ENCODE measurements at regions of chr12 and their contacts with region 1.

Region 1: GRCh38 chr12:1117970-1118563 is 127.0 kb downstream of the ERC1 start:
- DNase-seq: peak; percentile 81
- H3K4me3 ChIP-seq: no peak overlapping the region
- H3K27ac ChIP-seq: no peak overlapping the region
- H3K4me1 ChIP-seq: peaks cover 13% of the 10 kb centered on the region
- H3K27me3 ChIP-seq: no peaks in the 10 kb centered on the region
- CTCF ChIP-seq: peak; percentile 66 to 79
- POLR2A ChIP-seq: no peak

Region 2: GRCh38 chr12:1083889-1084262 is 34.2 kb before region 1 on chr12:
- CTCF ChIA-PET with region 1: no interaction called
- POLR2A ChIA-PET with region 1: no interaction called
- dilution Hi-C with region 1: no loop called
- intact Hi-C with region 1: no loop called
- DNase-seq: no peak
- H3K4me3 ChIP-seq: no peak overlapping the region
- H3K27ac ChIP-seq: no peak overlapping the region
- H3K4me1 ChIP-seq: no peaks in the 10 kb centered on the region
- H3K27me3 ChIP-seq: no peaks in the 10 kb centered on the region
- CTCF ChIP-seq: no peak
- POLR2A ChIP-seq: no peak

Region 3: DNA sequence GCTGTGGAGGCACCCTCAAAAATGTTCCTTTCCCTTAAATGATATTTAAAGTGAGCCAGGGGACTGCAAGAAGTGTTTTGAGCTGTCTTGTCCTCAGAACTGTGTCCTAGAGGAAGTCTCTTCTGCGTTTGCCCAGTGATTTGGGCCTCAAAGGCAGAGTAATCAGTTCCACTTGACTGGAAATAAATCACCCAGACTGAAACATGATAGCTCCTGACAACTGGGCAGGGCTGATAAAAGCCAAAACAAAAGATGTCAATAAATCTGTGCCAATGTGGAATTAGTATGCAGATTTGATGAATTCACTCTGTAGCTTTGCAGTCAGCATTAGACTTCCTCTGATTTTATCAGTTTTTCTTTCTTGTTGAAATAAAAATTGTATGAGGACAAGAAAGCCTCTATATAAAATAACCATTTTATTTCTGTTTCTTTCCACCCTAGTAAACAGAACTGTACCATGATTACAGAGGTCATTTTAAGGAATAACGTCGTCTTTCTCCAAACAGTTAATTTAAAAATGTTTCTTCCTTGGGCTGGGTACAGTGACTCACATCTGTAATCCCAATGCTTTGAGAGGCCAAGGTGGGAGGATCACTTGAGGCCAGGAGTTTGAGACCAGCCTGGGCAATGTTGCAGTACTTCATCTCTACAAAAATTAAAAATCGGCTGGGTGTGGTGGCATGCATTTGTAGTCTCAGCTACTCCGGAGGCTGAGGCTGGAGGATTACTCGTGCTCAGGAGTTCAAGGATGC is 53.8 kb after region 1 on chr12:
- CTCF ChIA-PET with region 1: interaction called, 11 read pairs
- POLR2A ChIA-PET with region 1: no interaction called
- dilution Hi-C with region 1: no loop called
- intact Hi-C with region 1: no loop called
- DNase-seq: peak; percentile 94
- H3K4me3 ChIP-seq: no peak overlapping the region
- H3K27ac ChIP-seq: peak overlapping the region; percentile 34
- H3K4me1 ChIP-seq: peaks cover 17% of the 10 kb centered on the region
- H3K27me3 ChIP-seq: no peaks in the 10 kb centered on the region
- CTCF ChIP-seq: no peak
- POLR2A ChIP-seq: peak; percentile 25

Region 4: DNA sequence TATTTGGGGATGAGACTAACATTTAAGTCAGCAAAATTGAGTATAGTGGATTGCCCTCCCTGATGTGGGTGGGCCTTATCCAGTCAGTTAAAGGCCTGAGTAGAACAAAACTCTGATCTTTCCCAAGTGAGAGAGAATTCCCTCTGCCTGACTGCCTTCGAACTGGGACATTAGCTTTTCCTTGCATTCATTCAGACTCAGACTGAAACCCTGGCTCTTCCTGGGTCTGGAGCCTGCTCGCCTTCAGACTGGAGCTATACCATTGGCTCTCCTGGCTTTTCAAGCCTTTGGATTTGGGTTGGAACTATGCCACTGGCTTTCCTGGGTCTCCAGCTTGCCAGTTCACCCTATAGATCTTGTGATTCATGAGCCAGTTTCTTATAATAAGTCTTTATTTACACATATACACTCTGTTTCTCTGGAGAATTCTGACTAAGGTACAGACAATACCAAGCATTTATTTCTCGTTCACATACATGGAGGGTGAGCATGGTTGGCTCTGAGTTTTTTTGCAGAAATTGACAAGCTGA is 169.4 kb after region 1 on chr12:
- CTCF ChIA-PET with region 1: interaction called, 18 read pairs
- POLR2A ChIA-PET with region 1: no interaction called
- dilution Hi-C with region 1: no loop called
- intact Hi-C with region 1: no loop called
- DNase-seq: no peak
- H3K4me3 ChIP-seq: no peak overlapping the region
- H3K27ac ChIP-seq: no peak overlapping the region
- H3K4me1 ChIP-seq: peaks cover 14% of the 10 kb centered on the region
- H3K27me3 ChIP-seq: no peaks in the 10 kb centered on the region
- CTCF ChIP-seq: no peak
- POLR2A ChIP-seq: no peak

Region 5: DNA sequence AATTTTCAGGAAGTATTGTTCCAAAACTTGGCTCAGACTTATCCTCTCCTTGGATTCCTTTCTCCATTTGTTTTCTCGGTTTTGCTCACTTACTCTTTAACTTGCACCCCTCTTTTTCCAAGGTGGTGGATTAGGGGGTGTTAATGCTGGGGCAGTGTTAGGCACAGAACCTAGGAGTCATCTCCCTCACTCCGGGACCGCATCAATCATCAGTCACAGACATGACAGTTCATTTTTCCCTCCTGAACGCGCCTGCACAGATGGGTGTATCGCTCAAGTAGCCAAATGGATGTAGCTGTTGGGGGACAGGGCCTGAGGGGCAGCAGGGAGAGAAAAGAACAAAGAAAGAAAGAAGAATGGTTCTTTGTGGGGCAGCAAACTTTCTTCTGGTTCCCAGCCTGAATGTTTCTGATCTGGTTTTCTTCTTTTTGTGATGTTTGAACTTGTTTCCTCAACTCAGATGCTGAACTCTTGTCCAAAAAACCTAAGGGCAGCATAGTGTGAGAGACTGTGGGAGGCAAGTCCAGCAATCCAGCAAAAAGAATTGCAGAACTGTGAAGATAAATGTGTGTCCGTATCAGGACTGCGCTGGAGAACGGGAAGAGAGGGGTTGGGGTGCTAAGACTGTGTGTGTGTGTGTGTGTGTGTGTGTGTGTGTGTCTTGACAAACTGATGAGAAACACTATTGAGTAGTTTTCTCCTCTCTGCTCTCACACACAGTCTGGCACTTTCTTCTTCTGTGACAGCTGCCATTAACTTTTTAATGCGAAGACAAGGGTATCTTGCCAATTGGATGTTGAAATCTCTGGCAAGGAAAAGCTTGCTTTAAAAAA is 345.2 kb after region 1 on chr12:
- CTCF ChIA-PET with region 1: interaction called, 18 read pairs
- POLR2A ChIA-PET with region 1: no interaction called
- dilution Hi-C with region 1: no loop called
- intact Hi-C with region 1: no loop called
- DNase-seq: no peak
- H3K4me3 ChIP-seq: no peak overlapping the region
- H3K27ac ChIP-seq: no peak overlapping the region
- H3K4me1 ChIP-seq: peaks cover 14% of the 10 kb centered on the region
- H3K27me3 ChIP-seq: peaks cover 0 to 5% of the 10 kb centered on the region in 2 experiments
- CTCF ChIP-seq: no peak
- POLR2A ChIP-seq: no peak

Region 6: DNA sequence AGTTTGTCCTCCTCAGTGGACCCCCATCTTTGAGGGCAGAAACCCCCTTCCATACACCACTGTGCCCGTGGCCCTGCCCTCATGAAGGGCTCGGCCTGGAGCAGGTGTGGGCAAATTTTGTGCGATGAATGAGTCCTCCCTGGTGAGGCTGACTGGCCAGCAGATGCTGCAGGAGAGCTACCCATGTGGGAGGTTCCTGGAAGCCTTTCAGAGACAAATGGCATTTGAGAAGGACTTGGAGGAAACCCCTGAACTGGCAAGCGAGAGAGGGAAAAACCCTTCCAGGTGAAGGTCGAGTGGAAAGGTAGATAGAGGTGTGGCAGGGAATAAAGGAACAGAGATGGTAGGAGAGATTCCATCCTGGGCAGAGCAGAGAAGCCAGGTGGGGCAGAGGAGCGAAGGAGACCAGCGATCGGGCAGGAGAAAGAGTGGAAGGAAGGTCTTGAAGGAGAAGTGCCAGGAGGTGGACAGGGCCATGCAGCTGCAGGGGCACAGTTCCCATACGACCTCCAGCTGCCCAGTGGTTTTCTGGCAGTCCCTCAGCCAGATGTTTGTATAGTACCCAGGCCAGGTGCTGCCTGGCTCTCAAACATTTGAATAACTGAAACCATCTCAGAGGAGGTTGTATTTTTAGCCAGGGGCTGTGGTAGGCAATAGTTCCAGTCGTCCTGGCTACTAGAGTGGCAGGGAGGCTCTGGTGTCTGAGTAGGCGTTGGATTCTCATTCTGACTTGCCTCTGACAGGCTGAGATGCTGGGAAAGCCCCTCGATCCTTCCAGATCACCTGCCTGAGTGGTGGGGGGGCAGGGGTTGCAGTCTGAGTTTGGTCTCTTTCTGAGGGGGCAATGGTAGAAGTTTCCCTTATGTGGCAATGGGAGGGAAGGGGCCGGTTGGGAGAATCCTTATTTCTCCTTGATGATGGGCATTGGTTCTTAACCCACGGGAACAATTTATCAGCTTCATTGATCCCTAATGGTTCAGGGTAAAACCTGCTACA is 436.2 kb after region 1 on chr12:
- CTCF ChIA-PET with region 1: interaction called, 10 read pairs
- POLR2A ChIA-PET with region 1: no interaction called
- dilution Hi-C with region 1: loop called (anchors 25 kb)
- intact Hi-C with region 1: no loop called
- DNase-seq: no peak
- H3K4me3 ChIP-seq: no peak overlapping the region
- H3K27ac ChIP-seq: no peak overlapping the region
- H3K4me1 ChIP-seq: no peaks in the 10 kb centered on the region
- H3K27me3 ChIP-seq: peaks cover 2 to 20% of the 10 kb centered on the region in 2 experiments
- CTCF ChIP-seq: no peak
- POLR2A ChIP-seq: no peak

Region 7: DNA sequence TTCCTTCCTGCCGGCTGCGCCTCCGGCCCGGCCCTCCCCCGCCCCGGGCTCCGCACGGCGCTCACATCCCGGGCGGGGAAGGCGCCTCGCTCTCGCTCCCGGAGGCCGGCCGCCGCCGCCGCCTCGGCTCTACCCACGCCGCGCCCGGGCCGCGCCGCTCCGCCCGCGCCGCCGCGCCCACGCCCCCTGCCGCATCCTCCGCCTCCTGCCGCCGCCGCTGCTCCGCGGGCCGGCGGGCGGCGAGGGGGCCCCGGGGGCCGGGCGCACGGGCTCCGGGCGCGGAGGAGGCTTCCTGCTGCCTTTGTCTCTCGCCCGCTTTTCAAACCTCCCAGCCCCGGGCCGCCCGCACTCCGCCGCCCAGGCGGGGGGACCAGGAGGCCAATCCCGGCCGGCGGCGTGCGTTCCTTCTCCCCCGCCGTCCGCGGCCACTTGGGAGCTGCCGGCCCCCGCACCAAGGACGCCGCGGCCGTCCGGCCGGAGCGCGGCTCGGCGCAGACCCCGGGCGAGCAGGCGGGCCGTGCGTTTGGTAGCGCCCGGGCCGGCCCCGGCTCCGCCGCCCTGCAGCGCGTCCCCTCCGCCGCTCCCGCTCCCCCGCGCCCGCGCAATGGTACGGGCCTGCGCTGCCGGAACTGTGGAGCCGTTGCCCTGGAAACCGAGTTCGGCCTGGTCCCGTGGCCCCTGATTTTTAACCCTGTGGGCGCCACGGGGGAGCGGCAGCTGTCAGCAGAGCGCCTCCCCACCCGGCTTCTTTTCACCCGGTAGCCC is 476.4 kb after region 1 on chr12 and contains the start of gene FBXL14:
- CTCF ChIA-PET with region 1: interaction called, 44 read pairs
- POLR2A ChIA-PET with region 1: no interaction called
- dilution Hi-C with region 1: no loop called
- intact Hi-C with region 1: no loop called
- DNase-seq: peak; percentile 74
- H3K4me3 ChIP-seq: peak within 1 kb of the TSS; percentile 75 to 91 (median 77)
- H3K27ac ChIP-seq: peak within 1 kb of the TSS; percentile 71
- H3K4me1 ChIP-seq: peaks cover 40% of the 10 kb centered on the region
- H3K27me3 ChIP-seq: no peaks in the 10 kb centered on the region
- CTCF ChIP-seq: no peak
- POLR2A ChIP-seq: peak; percentile 72
- total RNA-seq, gene FBXL14: 10.2 and 11.3 TPM in 2 replicates

Measured in endothelial cell of umbilical vein (primary cell).